A549 (cell line): ENCODE measurements at regions of chr14 and their contacts with region 1.

Region 1: GRCh38 chr14:65958664-65959562 is 527.3 kb upstream of the CCDC196 start:
- DNase-seq: peak; percentile 37 to 41
- ATAC-seq: peak in 1 of 2 experiments; percentile 84; a peak in 3 of 6 replicates
- H3K4me3 ChIP-seq: no peak overlapping the region
- H3K27ac ChIP-seq: no peak overlapping the region
- H3K4me1 ChIP-seq: no peaks in the 10 kb centered on the region
- CTCF ChIP-seq: peak; percentile 72
- EP300 ChIP-seq: no peak
- POLR2A ChIP-seq: no peak
- RAD21 ChIP-seq: peak; percentile 46 to 60

Region 2: DNA sequence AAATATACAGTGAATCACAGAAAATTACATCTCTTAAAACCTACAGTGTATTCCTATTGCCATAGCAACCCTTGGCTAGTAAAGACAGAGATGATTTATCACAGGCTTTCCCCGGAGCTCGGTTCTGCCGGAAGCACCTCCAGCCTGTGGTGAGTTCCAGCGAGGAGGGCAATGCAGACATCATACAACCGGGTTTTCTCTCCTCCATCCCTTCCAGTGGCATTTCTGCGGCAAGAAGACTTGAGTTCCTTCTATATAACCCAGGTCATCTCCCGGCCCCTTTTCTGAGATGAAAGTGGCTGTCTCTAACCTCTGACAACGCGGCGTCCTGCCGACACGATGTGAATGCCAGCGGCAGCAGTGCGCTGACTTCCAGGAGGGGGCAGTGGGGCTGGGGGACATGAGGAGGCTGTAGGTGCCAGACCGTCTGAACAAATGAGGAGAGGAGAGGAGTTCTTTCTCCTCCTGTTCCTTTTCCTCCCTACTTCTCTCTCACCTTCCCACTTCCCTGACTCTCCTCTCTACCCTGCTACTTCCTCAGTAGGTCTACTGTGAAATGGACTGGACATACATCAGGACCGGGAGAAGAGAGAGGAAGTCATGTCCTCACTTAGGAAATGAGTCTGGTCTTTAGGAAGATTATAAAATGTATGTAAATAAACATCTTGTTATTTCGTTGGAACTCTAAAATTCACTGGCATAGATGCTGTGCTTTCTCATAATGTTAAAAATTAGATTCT is 788.0 kb before region 1 on chr14:
- CTCF ChIA-PET with region 1: interaction called, 14 read pairs
- POLR2A ChIA-PET with region 1: no interaction called
- DNase-seq: peak; percentile 43 to 57
- ATAC-seq: peak; percentile 91 to 93
- H3K4me3 ChIP-seq: peak overlapping the region; percentile 42
- H3K27ac ChIP-seq: peak overlapping the region; percentile 65 to 67
- H3K4me1 ChIP-seq: peaks cover 4% of the 10 kb centered on the region; the same call in 1 of the 3 replicates
- CTCF ChIP-seq: peak; percentile 43
- EP300 ChIP-seq: no peak
- POLR2A ChIP-seq: no peak
- RAD21 ChIP-seq: peak; percentile 53 to 64

Region 3: GRCh38 chr14:65972891-65973290 is 14.0 kb after region 1 on chr14:
- CTCF ChIA-PET with region 1: interaction called, 10 read pairs
- POLR2A ChIA-PET with region 1: no interaction called
- DNase-seq: no peak
- ATAC-seq: no peak
- H3K4me3 ChIP-seq: no peak overlapping the region
- H3K27ac ChIP-seq: no peak overlapping the region
- H3K4me1 ChIP-seq: no peaks in the 10 kb centered on the region
- CTCF ChIP-seq: no peak
- EP300 ChIP-seq: no peak
- POLR2A ChIP-seq: no peak
- RAD21 ChIP-seq: no peak